Aorta (tissue), 5 donors: ENCODE measurements at regions of chr7 and their contacts with region 1.

Region 1: GRCh38 chr7:94313926-94314325 is 80.8 kb upstream of the COL1A2 start:
- DNase-seq: no peak
- ATAC-seq: no peak
- H3K4me3 ChIP-seq: no peak overlapping the region
- H3K27ac ChIP-seq: peak overlapping the region in 1 of 2 donors; percentile 77
- H3K4me1 ChIP-seq: peaks cover 0 to 3% of the 10 kb centered on the region in 2 donors
- H3K27me3 ChIP-seq: no peaks in the 10 kb centered on the region

Region 2: GRCh38 chr7:94301024-94301586 is 12.8 kb before region 1 on chr7:
- intact Hi-C with region 1: loop called in 1 of 2 experiments (anchors 1 kb)
- DNase-seq: peak; percentile 89 to 93
- ATAC-seq: peak; percentile 88
- H3K4me3 ChIP-seq: no peak overlapping the region
- H3K27ac ChIP-seq: peak overlapping the region; percentile 87 to 100
- H3K4me1 ChIP-seq: peaks cover 10 to 19% of the 10 kb centered on the region in 2 donors
- H3K27me3 ChIP-seq: no peaks in the 10 kb centered on the region

Region 3: DNA sequence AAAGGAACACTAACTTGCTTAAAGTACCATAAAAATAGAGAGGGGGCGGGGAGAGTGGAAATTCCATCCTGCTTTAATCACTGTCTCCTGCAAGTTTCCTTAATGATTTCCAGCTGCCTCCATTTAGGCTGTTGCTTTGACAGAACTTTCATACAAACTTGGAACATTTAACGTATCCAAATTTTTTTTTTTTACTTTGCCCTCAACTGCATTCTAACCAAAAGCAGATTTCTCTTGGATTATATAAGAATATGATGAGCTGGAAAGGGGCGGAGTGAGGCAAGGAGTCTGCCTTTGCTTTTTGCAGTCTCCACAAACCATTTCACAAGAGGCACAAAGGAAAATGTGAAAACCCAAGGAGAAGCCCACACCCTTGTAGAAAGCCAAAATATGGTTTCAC is 34.2 kb after region 1 on chr7:
- intact Hi-C with region 1: loop called in 1 of 2 experiments (anchors 5 kb)
- DNase-seq: peak in 1 of 2 donors; percentile 61
- ATAC-seq: peak; percentile 90
- H3K4me3 ChIP-seq: peak overlapping the region in 1 of 2 donors; percentile 48
- H3K27ac ChIP-seq: peak overlapping the region; percentile 63 to 76
- H3K4me1 ChIP-seq: peaks cover 0 to 3% of the 10 kb centered on the region in 2 donors
- H3K27me3 ChIP-seq: no peaks in the 10 kb centered on the region

Region 4: GRCh38 chr7:94355454-94355853 is 41.5 kb after region 1 on chr7:
- intact Hi-C with region 1: loop called in 1 of 2 experiments (anchors 5 kb)
- DNase-seq: peak in 1 of 2 donors; percentile 44
- ATAC-seq: peak; percentile 8
- H3K4me3 ChIP-seq: no peak overlapping the region
- H3K27ac ChIP-seq: peak overlapping the region; percentile 13 to 67
- H3K4me1 ChIP-seq: peaks cover 0 to 7% of the 10 kb centered on the region in 2 donors
- H3K27me3 ChIP-seq: no peaks in the 10 kb centered on the region